IMR-90 (cell line): ENCODE measurements at regions of chr14 and their contacts with region 1.

Region 1: DNA sequence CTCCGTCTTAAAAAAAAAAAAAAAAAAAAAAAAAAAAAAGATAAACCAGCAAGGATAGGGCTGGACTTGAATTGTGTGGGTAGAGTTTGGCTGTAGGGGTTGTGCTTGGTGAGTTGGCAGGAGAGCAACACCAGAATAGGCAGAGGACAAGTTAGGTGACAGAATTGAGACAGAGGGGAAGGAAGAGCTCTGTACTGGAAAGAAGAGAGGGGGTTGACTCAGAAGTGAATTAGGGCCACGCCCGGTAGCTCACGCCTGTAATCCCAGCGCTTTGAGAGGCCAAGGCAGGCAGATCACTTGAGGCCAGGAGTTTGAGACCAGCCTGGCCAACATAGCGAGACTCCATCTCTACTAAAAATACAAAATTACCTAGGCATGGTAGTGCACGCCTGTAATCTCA is 6.1 kb upstream of the TMEM30B start:
- DNase-seq: no peak
- ATAC-seq: no peak
- H3K4me3 ChIP-seq: no peak overlapping the region
- H3K27ac ChIP-seq: no peak overlapping the region
- H3K4me1 ChIP-seq: no peaks in the 10 kb centered on the region
- H3K27me3 ChIP-seq: peaks cover 5% of the 10 kb centered on the region
- CTCF ChIP-seq: no peak
- POLR2A ChIP-seq: no peak
- RAD21 ChIP-seq: no peak

Region 2: GRCh38 chr14:60331201-60332045 is 955.8 kb before region 1 on chr14:
- CTCF ChIA-PET with region 1: interaction called, 3 read pairs
- POLR2A ChIA-PET with region 1: no interaction called
- dilution Hi-C with region 1: no loop called
- in situ Hi-C with region 1: no loop called
- intact Hi-C with region 1: loop called (anchors 5 kb)
- DNase-seq: peak; percentile 37
- ATAC-seq: peak; percentile 72
- H3K4me3 ChIP-seq: peak overlapping the region; percentile 36
- H3K27ac ChIP-seq: no peak overlapping the region
- H3K4me1 ChIP-seq: no peaks in the 10 kb centered on the region; the same call in 1 of the 2 replicates
- H3K27me3 ChIP-seq: peaks cover 28% of the 10 kb centered on the region
- CTCF ChIP-seq: peak; percentile 62
- POLR2A ChIP-seq: no peak
- RAD21 ChIP-seq: peak; percentile 48

Region 3: DNA sequence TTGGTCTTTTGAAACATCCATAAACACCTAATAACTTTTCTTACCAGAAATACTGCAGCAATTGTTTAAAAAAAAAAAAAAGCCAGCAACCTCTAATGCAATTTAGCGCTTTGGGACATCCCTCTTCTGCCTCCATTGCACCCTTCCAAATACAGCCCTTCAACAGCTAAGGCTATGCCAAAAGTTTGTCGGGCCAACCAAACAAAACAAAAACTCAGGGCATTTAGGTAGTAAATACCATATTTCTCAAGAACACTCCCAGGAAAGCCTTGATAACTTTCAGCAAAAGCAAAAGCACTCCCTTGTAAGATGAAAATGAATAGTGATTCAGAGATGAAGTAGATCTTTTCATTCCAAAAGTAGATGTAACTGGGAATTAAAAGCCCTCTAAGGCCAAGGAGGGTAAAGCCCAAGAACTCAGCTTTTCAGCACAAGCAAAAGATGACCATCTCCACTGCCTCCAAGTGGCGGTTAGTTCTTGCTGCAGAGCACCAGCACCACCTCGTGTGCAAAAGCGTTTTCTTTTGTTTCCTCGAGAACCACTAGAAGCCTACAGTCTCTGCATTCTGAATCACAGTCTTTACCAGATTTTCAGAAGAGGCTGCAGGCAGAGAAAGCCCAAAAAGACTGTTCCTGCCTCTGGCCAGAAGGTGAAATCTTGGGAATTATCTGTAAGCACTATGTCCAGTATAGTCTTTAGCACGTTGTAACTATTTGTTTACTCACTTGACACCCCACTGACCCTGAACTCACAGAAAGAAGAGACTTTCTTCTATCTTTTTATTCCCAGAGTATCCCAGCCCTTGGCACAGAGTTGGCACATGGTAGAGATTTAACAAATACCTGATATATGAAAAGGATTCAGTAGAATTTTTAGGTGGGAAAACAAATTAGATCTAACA is 725.1 kb before region 1 on chr14:
- CTCF ChIA-PET with region 1: no interaction called
- POLR2A ChIA-PET with region 1: no interaction called
- dilution Hi-C with region 1: no loop called
- in situ Hi-C with region 1: no loop called
- intact Hi-C with region 1: loop called (anchors 5 kb)
- DNase-seq: peak; percentile 82
- ATAC-seq: peak; percentile 89
- H3K4me3 ChIP-seq: no peak overlapping the region
- H3K27ac ChIP-seq: no peak overlapping the region
- H3K4me1 ChIP-seq: 0 out of 2 replicates have a peak, but pooled peaks cover 1% of the 10 kb centered on the region
- H3K27me3 ChIP-seq: no peaks in the 10 kb centered on the region
- CTCF ChIP-seq: peak; percentile 80
- POLR2A ChIP-seq: no peak
- RAD21 ChIP-seq: peak; percentile 79